Heart left ventricle (tissue), 16 donors: ENCODE measurements at regions of chr12 and their contacts with region 1.

Region 1: GRCh38 chr12:80053048-80053790 is 46.1 kb upstream of the OTOGL start:
- DNase-seq: peak; percentile 50 to 74 (median 62)
- ATAC-seq: peak; percentile 74 to 88 (median 76)
- H3K4me3 ChIP-seq: no peak overlapping the region
- H3K27ac ChIP-seq: peak overlapping the region in 6 of 12 donors; percentile 1 to 77 (median 17)
- H3K4me1 ChIP-seq: peaks cover 0 to 23% (median 4%) of the 10 kb centered on the region in 12 donors
- H3K27me3 ChIP-seq: no peaks in the 10 kb centered on the region
- CTCF ChIP-seq: no peak
- POLR2A ChIP-seq: no peak

Region 2: GRCh38 chr12:80017261-80017870 is 35.9 kb before region 1 on chr12:
- intact Hi-C with region 1: loop called in 1 of 10 experiments (anchors 5 kb)
- DNase-seq: no peak
- ATAC-seq: no peak
- H3K4me3 ChIP-seq: no peak overlapping the region
- H3K27ac ChIP-seq: peak overlapping the region in 6 of 12 donors; percentile 6 to 66 (median 43)
- H3K4me1 ChIP-seq: peaks cover 0 to 8% (median 0%) of the 10 kb centered on the region in 12 donors
- H3K27me3 ChIP-seq: no peaks in the 10 kb centered on the region
- CTCF ChIP-seq: no peak
- POLR2A ChIP-seq: no peak

Region 3: GRCh38 chr12:80419644-80420043 is 366.4 kb after region 1 on chr12:
- intact Hi-C with region 1: no loop called
- DNase-seq: no peak
- ATAC-seq: no peak
- H3K4me3 ChIP-seq: no peak overlapping the region
- H3K27ac ChIP-seq: no peak overlapping the region
- H3K4me1 ChIP-seq: peaks cover 0 to 2% (median 0%) of the 10 kb centered on the region in 12 donors
- H3K27me3 ChIP-seq: no peaks in the 10 kb centered on the region
- CTCF ChIP-seq: no peak
- POLR2A ChIP-seq: no peak